ENCODE measurements at regions of chr3 and their contacts with region 1.

Region 1: GRCh38 chr3:64030741-64031140 is 7.4 kb upstream of the PSMD6 start:
- DNase-seq: peak; percentile 72 to 77
- H3K4me3 ChIP-seq: no peak overlapping the region
- H3K27ac ChIP-seq: no peak overlapping the region
- H3K4me1 ChIP-seq: no peaks in the 10 kb centered on the region
- H3K27me3 ChIP-seq: no peaks in the 10 kb centered on the region
- CTCF ChIP-seq: peak; percentile 72 to 96 (median 88)
- POLR2A ChIP-seq: no peak

Region 2: DNA sequence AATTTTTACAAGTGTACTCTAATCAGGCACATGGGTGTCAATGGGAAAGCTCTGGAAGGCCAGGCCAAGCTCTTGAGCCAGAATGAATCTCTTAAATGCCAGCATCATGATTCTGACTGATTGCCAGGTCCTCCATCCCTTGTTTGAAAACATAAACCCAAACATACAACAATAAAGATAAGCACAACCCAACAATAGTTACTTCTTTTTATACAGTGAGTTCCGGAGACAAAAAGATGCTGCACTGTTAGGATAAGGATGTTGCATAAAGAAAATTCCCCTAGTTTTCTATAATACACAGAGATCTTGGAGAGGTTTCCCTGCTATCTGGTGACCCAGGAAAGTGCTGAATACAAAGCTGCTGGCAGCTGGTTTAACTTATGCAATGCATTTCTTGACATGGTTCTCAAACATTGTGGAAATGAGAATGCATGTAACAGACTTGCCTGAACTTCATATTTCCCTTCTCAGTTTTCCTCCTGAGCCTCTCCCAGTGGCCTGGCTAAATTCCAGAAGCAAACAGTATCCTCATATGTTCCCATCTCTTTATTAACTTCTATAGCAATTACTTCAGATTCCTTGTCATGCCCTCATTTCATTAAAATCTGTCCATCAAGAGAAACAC is 374.6 kb after region 1 on chr3:
- intact Hi-C with region 1: loop called (anchors 2 kb)
- DNase-seq: no peak
- H3K4me3 ChIP-seq: no peak overlapping the region
- H3K27ac ChIP-seq: no peak overlapping the region
- H3K4me1 ChIP-seq: no peaks in the 10 kb centered on the region
- H3K27me3 ChIP-seq: no peaks in the 10 kb centered on the region
- CTCF ChIP-seq: no peak
- POLR2A ChIP-seq: no peak

Region 3: DNA sequence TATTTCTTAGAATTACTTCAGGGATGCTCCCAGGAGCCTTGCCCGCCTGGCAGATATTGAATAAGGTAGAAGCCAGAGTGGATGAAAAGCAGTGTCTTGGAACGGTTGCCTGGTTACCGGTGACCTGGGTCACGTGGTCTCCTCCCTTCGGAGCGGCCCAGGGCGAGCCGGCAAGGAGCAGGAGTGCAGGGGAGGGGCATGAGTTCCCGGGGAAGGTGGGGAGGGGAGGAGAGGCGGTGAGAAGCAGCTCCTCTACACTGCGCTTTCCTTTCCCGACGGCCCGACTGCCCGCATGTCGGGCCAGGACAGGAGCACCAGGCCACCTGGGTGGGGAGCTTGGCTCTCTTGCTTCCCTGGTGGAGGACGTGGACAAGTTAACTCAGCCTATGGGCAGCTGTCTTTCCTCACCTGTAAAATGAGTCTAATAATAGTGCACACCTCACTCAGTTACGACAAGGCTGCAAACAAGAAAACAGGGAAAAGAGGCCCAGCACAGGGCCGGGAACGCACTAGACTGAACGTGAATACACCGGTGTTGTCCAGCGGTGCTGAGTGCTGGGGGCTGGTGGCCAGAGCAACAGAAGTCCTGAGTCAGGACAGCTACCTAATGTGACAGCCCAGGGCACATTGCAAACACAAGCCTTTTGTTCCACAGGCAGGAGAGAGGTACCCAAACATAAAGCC is 458.8 kb after region 1 on chr3:
- intact Hi-C with region 1: loop called (anchors 5 kb)
- DNase-seq: peak; percentile 93 to 94
- H3K4me3 ChIP-seq: no peak overlapping the region
- H3K27ac ChIP-seq: peak overlapping the region in 2 of 3 donors; percentile 14 to 63
- H3K4me1 ChIP-seq: peaks cover 0 to 12% of the 10 kb centered on the region in 2 donors
- H3K27me3 ChIP-seq: no peaks in the 10 kb centered on the region
- CTCF ChIP-seq: no peak
- POLR2A ChIP-seq: peak in 1 of 2 donors; percentile 19